B cell (primary cell): ENCODE measurements at regions of chr20 and their contacts with region 1.

Region 1: DNA sequence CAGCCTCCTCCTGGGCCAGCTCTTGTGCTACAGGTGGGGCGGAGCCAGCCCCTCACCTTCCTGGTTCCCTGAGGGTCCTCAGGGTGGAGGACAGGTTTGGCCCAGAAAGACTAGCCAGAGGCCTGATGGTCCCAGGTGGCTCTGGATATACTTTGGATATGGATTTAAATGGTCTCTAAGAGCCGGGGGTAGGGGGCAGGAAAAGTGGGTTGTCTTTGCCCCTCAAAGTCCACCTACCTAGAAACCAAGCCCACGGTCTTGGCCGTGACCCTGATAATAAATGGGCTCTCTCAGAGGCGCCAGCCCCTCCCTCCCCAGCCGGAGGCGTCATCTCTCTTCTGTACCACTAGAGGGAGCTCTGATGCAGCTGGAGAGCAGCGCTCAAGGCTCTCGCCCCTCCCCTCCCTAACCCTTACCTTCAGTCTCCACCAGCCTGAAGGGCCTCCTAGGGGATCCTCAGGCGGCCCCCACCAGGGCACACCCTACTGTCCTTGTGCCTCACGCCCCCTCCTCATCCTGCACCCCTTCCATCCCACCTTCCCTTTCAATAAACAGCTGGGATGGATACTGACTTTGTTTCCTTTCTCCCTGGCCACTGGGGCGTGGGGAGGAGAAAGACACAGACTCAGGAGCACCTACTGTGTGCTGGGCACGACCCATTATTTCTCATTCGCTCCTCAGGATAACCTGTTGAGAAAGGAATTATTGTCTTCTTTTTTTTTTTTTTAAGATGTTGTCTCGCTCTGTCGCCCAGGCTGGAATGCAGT is 7.6 kb downstream of the NRSN2 start:
- DNase-seq: peak; percentile 89
- ATAC-seq: peak; percentile 100
- H3K4me3 ChIP-seq: no peak overlapping the region
- H3K4me3 Mint-ChIP-seq: no peak overlapping the region
- H3K27ac ChIP-seq: no peak overlapping the region
- H3K27ac Mint-ChIP-seq: no peak overlapping the region
- H3K4me1 ChIP-seq: peaks cover 3 to 8% of the 10 kb centered on the region in 2 donors
- H3K4me1 Mint-ChIP-seq: peaks cover 11% of the 10 kb centered on the region
- H3K27me3 ChIP-seq: no peaks in the 10 kb centered on the region
- H3K27me3 Mint-ChIP-seq: no peaks in the 10 kb centered on the region
- CTCF ChIP-seq: peak; percentile 91

Region 2: DNA sequence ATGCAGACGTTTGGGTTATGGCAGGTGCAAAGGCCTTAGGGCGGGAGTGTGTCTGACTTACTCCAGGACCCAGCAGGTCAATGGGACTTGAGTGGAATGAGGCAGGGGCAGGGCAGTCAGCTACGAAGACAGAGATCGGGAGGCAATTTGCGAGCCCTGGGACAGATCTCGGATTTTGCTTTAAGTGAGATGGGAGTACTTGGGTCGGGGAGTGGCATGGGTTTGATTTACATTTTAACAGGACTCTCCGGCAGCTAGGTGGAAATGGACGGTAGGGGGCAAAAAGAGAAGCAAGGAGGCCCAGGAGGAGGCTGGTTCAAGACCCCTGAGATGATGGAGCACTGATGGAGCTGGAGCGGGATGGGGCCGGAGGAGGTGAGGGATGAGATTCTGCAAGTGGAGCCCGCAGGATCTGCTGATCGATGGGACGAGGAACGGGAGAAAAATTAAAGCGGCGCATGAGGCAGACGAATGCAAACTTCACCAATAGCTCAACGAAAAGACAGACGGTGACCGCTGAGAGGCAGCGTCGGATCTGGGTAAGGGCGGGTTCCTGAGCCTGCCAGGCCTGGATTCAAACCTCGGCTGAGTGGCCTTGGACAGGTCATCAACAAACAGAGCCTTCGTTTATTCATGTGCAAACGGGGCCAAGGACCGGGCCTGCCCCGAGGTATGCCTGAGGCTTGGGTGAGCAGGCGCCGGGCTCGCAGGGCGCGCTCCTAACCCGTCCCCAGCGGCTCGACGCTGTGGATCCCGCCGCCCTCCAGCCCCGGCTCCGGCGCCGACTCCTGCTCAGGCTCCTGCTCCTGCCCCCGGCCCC is 52.9 kb after region 1 on chr20:
- CTCF ChIA-PET with region 1: interaction called, 5 read pairs
- POLR2A ChIA-PET with region 1: no interaction called
- intact Hi-C with region 1: loop called (anchors 1 kb)
- DNase-seq: peak; percentile 81
- ATAC-seq: peak; percentile 69
- H3K4me3 ChIP-seq: peak overlapping the region; percentile 28 to 99 (median 96)
- H3K4me3 Mint-ChIP-seq: peak overlapping the region; percentile 92
- H3K27ac ChIP-seq: peak overlapping the region; percentile 18 to 64
- H3K27ac Mint-ChIP-seq: peak overlapping the region; percentile 96
- H3K4me1 ChIP-seq: peaks cover 30 to 33% of the 10 kb centered on the region in 2 donors
- H3K4me1 Mint-ChIP-seq: peaks cover 42% of the 10 kb centered on the region
- H3K27me3 ChIP-seq: no peaks in the 10 kb centered on the region
- H3K27me3 Mint-ChIP-seq: no peaks in the 10 kb centered on the region
- CTCF ChIP-seq: peak; percentile 64

Region 3: GRCh38 chr20:462199-462991 is 107.9 kb after region 1 on chr20 and contains the start of gene TBC1D20:
- CTCF ChIA-PET with region 1: interaction called, 4 read pairs
- POLR2A ChIA-PET with region 1: no interaction called
- intact Hi-C with region 1: loop called (anchors 1 kb)
- DNase-seq: peak; percentile 94
- ATAC-seq: peak; percentile 95
- H3K4me3 ChIP-seq: peak within 1 kb of the TSS; percentile 58 to 83 (median 76)
- H3K4me3 Mint-ChIP-seq: peak within 1 kb of the TSS; percentile 94
- H3K27ac ChIP-seq: peak within 1 kb of the TSS; percentile 61 to 85
- H3K27ac Mint-ChIP-seq: peak within 1 kb of the TSS; percentile 95
- H3K4me1 ChIP-seq: peaks cover 14 to 17% of the 10 kb centered on the region in 2 donors
- H3K4me1 Mint-ChIP-seq: peaks cover 37% of the 10 kb centered on the region
- H3K27me3 ChIP-seq: peaks cover 0 to 1% (median 0%) of the 10 kb centered on the region in 4 experiments
- H3K27me3 Mint-ChIP-seq: peaks cover 3% of the 10 kb centered on the region
- CTCF ChIP-seq: no peak
- total RNA-seq, gene TBC1D20: 37.9 and 40.0 TPM in 2 replicates

Region 4: GRCh38 chr20:497979-498378 is 143.5 kb after region 1 on chr20:
- CTCF ChIA-PET with region 1: no interaction called
- POLR2A ChIA-PET with region 1: no interaction called
- intact Hi-C with region 1: no loop called
- DNase-seq: no peak
- ATAC-seq: no peak
- H3K4me3 ChIP-seq: no peak overlapping the region
- H3K4me3 Mint-ChIP-seq: no peak overlapping the region
- H3K27ac ChIP-seq: no peak overlapping the region
- H3K27ac Mint-ChIP-seq: no peak overlapping the region
- H3K4me1 ChIP-seq: no peaks in the 10 kb centered on the region
- H3K4me1 Mint-ChIP-seq: no peaks in the 10 kb centered on the region
- H3K27me3 ChIP-seq: no peaks in the 10 kb centered on the region
- H3K27me3 Mint-ChIP-seq: no peaks in the 10 kb centered on the region
- CTCF ChIP-seq: no peak

Region 5: DNA sequence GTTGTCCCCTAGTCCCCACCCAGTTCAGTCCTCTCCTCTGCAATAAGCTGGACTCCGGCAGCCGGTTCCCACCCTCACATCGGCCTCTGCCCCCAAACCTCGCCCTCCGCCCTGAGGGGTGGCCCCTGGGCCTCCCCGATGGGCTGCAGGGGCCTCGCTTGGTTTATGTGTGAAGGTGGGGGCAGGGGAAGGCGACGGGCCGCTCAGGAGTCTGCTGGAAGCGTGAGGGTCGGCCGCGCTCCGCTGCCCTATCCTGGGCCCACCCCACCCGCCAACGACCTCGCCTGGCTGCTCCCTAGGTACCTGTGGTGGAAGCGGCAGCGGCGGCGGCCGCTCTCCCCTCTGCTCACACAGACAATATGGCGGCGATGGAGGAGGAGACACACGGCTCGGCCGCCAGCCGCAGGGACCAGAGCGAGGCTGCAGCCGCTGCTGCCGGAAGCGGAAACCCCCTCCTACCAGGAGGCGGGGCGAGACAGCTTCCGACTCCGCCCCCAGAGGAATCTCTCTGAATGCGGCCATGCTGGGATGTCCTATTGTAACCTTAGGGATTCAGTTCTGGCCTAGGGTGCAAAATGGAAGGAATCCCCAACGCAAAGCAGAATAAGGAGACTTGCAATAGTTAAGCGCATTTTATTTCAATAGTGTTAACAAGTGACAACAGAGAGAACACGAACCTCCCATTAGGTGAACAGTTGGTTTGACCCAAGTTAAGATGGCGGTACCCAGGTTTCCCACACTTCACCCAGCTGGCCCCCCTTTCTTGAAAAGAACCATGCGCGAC is 189.1 kb after region 1 on chr20 and contains the start of gene CSNK2A1:
- CTCF ChIA-PET with region 1: interaction called, 4 read pairs
- POLR2A ChIA-PET with region 1: no interaction called
- intact Hi-C with region 1: loop called (anchors 5 kb)
- DNase-seq: peak; percentile 99
- ATAC-seq: peak; percentile 91
- H3K4me3 ChIP-seq: peak within 1 kb of the TSS; percentile 30 to 98 (median 85)
- H3K4me3 Mint-ChIP-seq: peak within 1 kb of the TSS; percentile 95
- H3K27ac ChIP-seq: peak within 1 kb of the TSS; percentile 93 to 99
- H3K27ac Mint-ChIP-seq: peak within 1 kb of the TSS; percentile 100
- H3K4me1 ChIP-seq: peaks cover 33 to 36% of the 10 kb centered on the region in 2 donors
- H3K4me1 Mint-ChIP-seq: peaks cover 53% of the 10 kb centered on the region
- H3K27me3 ChIP-seq: peaks cover 0 to 4% (median 2%) of the 10 kb centered on the region in 4 experiments
- H3K27me3 Mint-ChIP-seq: peaks cover 4% of the 10 kb centered on the region
- CTCF ChIP-seq: no peak
- total RNA-seq, gene CSNK2A1: 125 and 135 TPM in 2 replicates

Region 6: GRCh38 chr20:667391-667964 is 313.0 kb after region 1 on chr20:
- CTCF ChIA-PET with region 1: no interaction called
- POLR2A ChIA-PET with region 1: no interaction called
- intact Hi-C with region 1: loop called (anchors 5 kb)
- DNase-seq: peak; percentile 41
- ATAC-seq: no peak
- H3K4me3 ChIP-seq: no peak overlapping the region
- H3K4me3 Mint-ChIP-seq: no peak overlapping the region
- H3K27ac ChIP-seq: no peak overlapping the region
- H3K27ac Mint-ChIP-seq: no peak overlapping the region
- H3K4me1 ChIP-seq: no peaks in the 10 kb centered on the region
- H3K4me1 Mint-ChIP-seq: peaks cover 7% of the 10 kb centered on the region
- H3K27me3 ChIP-seq: peaks cover 0 to 61% (median 16%) of the 10 kb centered on the region in 4 experiments
- H3K27me3 Mint-ChIP-seq: peaks cover 62% of the 10 kb centered on the region
- CTCF ChIP-seq: peak; percentile 64